Lower leg skin (tissue), 4 donors: ENCODE measurements at regions of chr15 and their contacts with region 1.

Region 1: GRCh38 chr15:39362821-39363561 is 217.9 kb upstream of the THBS1 start:
- DNase-seq: no peak
- H3K4me3 ChIP-seq: no peak overlapping the region
- CTCF ChIP-seq: no peak
- POLR2A ChIP-seq: no peak

Region 2: GRCh38 chr15:38733331-38733730 is 629.7 kb before region 1 on chr15:
- intact Hi-C with region 1: loop called (anchors 10 kb)
- DNase-seq: no peak
- H3K4me3 ChIP-seq: no peak overlapping the region
- CTCF ChIP-seq: no peak
- POLR2A ChIP-seq: no peak

Region 3: GRCh38 chr15:39287322-39288195 is 75.4 kb before region 1 on chr15:
- intact Hi-C with region 1: no loop called
- DNase-seq: no peak
- H3K4me3 ChIP-seq: no peak overlapping the region
- CTCF ChIP-seq: no peak
- POLR2A ChIP-seq: no peak